Astrocyte of the cerebellum (primary cell): ENCODE measurements at regions of chr12 and their contacts with region 1.

Region 1: GRCh38 chr12:53295070-53295890 is at the start of gene PFDN5:
- DNase-seq: peak; percentile 82
- H3K4me3 ChIP-seq: peak within 1 kb of the TSS; percentile 99
- CTCF ChIP-seq: no peak

Region 2: DNA sequence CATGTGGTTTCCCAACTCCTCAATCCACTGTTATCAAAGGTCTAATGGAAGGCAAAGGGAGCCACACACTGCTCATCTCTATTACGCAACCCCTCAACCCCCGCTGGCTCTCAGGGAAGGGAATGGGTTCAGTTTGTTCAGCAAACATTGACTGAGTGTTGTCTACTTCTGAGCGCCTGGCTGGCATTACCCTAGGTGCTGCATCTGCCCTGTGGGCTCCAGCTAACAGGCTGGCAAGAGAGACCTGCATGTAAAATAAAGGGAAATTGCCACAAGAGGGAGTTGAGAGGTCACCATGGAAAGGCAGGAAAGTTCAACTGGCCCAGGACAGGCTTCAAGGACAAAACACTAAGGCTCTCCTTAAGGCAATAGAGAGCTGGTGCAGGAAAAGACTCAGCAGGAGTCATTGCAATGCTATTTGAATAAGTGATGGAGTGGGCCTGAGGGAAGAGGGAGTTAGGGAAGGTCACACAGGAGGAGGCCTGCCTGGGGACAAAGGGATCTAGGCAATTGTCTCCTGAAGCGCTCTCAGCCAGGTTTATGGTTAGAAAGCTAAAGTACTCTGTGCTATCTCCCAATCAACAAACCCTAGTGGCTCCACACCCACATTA is 120.3 kb before region 1 on chr12:
- in situ Hi-C with region 1: loop called (anchors 5 kb)
- DNase-seq: no peak
- H3K4me3 ChIP-seq: no peak overlapping the region
- CTCF ChIP-seq: peak; percentile 20

Region 3: GRCh38 chr12:53336181-53336681 is 41.0 kb after region 1 on chr12 and contains the start of gene SP7:
- in situ Hi-C with region 1: no loop called
- DNase-seq: no peak
- H3K4me3 ChIP-seq: no peak within 1 kb of the TSS
- CTCF ChIP-seq: no peak